CD8-positive, alpha-beta T cell (primary cell): ENCODE measurements at regions of chrX and their contacts with region 1.

Region 1: GRCh38 chrX:43958529-43958928 is 14.7 kb downstream of the NDP start:
- DNase-seq: peak in 4 of 9 experiments; percentile 0 to 76 (median 39)
- ATAC-seq: peak; percentile 55
- H3K4me3 ChIP-seq: no peak overlapping the region
- H3K4me3 Mint-ChIP-seq: no peak overlapping the region
- H3K27ac ChIP-seq: no peak overlapping the region
- H3K27ac Mint-ChIP-seq: no peak overlapping the region
- H3K4me1 ChIP-seq: no peaks in the 10 kb centered on the region
- H3K4me1 Mint-ChIP-seq: no peaks in the 10 kb centered on the region
- H3K27me3 ChIP-seq: no peaks in the 10 kb centered on the region
- H3K27me3 Mint-ChIP-seq: peaks cover 3% of the 10 kb centered on the region
- CTCF ChIP-seq: peak; percentile 69

Region 2: GRCh38 chrX:43514820-43515219 is 443.7 kb before region 1 on chrX:
- CTCF ChIA-PET with region 1: no interaction called
- POLR2A ChIA-PET with region 1: no interaction called
- intact Hi-C with region 1: no loop called
- DNase-seq: no peak
- ATAC-seq: no peak
- H3K4me3 ChIP-seq: no peak overlapping the region
- H3K4me3 Mint-ChIP-seq: no peak overlapping the region
- H3K27ac ChIP-seq: no peak overlapping the region
- H3K27ac Mint-ChIP-seq: no peak overlapping the region
- H3K4me1 ChIP-seq: no peaks in the 10 kb centered on the region
- H3K4me1 Mint-ChIP-seq: no peaks in the 10 kb centered on the region
- H3K27me3 ChIP-seq: no peaks in the 10 kb centered on the region
- H3K27me3 Mint-ChIP-seq: no peaks in the 10 kb centered on the region
- CTCF ChIP-seq: no peak

Region 3: DNA sequence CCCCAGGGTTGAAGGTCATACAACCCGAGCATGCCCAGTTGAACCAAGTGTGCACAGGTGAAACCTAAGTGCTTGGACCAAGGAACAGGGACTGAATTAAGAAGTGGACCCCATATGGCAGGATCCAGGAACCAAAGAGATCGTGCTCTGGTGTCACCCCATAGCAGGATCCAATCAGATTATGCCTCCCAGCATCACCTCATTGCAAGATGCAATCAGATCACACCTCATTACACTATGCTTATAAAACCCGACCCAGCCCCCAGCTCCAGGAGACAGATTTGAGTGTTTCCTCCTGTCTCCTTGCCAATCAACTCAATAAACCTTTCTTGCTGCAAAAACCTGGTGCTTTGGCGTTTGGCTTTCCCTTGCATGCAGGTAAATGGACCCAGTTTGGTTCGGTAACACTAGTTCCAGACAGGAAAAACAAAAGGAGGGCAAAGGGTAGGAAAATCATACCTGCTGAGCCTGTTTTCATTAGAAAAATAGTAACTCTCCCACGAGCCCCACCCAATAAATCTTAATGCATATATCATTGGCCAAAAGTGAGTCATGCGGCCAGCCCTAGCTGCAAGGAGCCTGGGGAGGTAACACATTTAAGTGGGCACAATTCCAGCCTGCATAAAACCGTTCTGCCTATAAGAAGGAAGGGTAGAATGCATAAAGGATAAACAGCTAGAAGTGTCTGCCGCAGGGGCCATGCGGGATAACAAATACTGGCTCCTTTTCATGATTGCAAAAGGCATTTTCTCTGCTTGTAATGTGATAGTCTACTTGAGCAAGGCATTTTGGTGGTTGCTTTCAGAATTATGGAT is 347.6 kb after region 1 on chrX:
- CTCF ChIA-PET with region 1: interaction called, 16 read pairs
- POLR2A ChIA-PET with region 1: no interaction called
- intact Hi-C with region 1: loop called in 1 of 2 experiments (anchors 5 kb)
- DNase-seq: no peak
- ATAC-seq: no peak
- H3K4me3 ChIP-seq: no peak overlapping the region
- H3K4me3 Mint-ChIP-seq: no peak overlapping the region
- H3K27ac ChIP-seq: no peak overlapping the region
- H3K27ac Mint-ChIP-seq: no peak overlapping the region
- H3K4me1 ChIP-seq: peaks cover 3% of the 10 kb centered on the region
- H3K4me1 Mint-ChIP-seq: peaks cover 8% of the 10 kb centered on the region
- H3K27me3 ChIP-seq: no peaks in the 10 kb centered on the region
- H3K27me3 Mint-ChIP-seq: no peaks in the 10 kb centered on the region
- CTCF ChIP-seq: no peak

Region 4: GRCh38 chrX:45077748-45078424 is 1119.4 kb after region 1 on chrX:
- CTCF ChIA-PET with region 1: no interaction called
- POLR2A ChIA-PET with region 1: no interaction called
- intact Hi-C with region 1: loop called in 1 of 2 experiments (anchors 5 kb)
- DNase-seq: peak in 1 of 9 experiments; percentile 23
- ATAC-seq: no peak
- H3K4me3 ChIP-seq: no peak overlapping the region
- H3K4me3 Mint-ChIP-seq: peak overlapping the region; percentile 45
- H3K27ac ChIP-seq: no peak overlapping the region
- H3K27ac Mint-ChIP-seq: peak overlapping the region; percentile 69
- H3K4me1 ChIP-seq: peaks cover 3% of the 10 kb centered on the region
- H3K4me1 Mint-ChIP-seq: peaks cover 27% of the 10 kb centered on the region
- H3K27me3 ChIP-seq: no peaks in the 10 kb centered on the region
- H3K27me3 Mint-ChIP-seq: no peaks in the 10 kb centered on the region
- CTCF ChIP-seq: no peak

Region 5: DNA sequence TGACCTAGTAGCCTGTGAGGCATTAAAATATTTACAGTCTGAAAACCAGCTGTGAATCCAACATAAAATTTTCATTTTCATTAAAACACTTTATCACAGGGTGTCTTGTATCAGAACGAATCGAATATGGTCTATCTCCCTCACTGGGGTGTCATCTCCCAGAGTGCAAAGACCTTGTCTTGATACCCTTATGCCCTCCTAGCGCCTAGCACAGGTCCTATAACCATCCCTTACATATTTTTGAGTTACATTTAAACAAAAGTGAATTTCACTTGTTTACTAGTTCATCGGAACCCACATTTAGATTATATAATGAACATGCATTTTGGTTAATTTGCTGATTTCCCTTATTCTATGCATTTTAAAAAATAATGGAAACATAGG is 1228.1 kb after region 1 on chrX:
- CTCF ChIA-PET with region 1: interaction called, 6 read pairs
- POLR2A ChIA-PET with region 1: no interaction called
- intact Hi-C with region 1: loop called (anchors 2 kb)
- DNase-seq: no peak
- ATAC-seq: no peak
- H3K4me3 ChIP-seq: no peak overlapping the region
- H3K4me3 Mint-ChIP-seq: peak overlapping the region; percentile 89
- H3K27ac ChIP-seq: no peak overlapping the region
- H3K27ac Mint-ChIP-seq: no peak overlapping the region
- H3K4me1 ChIP-seq: no peaks in the 10 kb centered on the region
- H3K4me1 Mint-ChIP-seq: peaks cover 20% of the 10 kb centered on the region
- H3K27me3 ChIP-seq: no peaks in the 10 kb centered on the region
- H3K27me3 Mint-ChIP-seq: no peaks in the 10 kb centered on the region
- CTCF ChIP-seq: no peak